ENCODE measurements at regions of chr11 and their contacts with region 1.

Region 1: GRCh38 chr11:63768237-63769043 is at the start of gene ZFTA:
- DNase-seq: peak; percentile 64
- ATAC-seq: peak; percentile 59
- H3K4me3 ChIP-seq: peak within 1 kb of the TSS; percentile 100
- H3K27ac ChIP-seq: no peak within 1 kb of the TSS
- H3K4me1 ChIP-seq: peaks cover 9% of the 10 kb centered on the region; the same call in 1 of the 2 replicates
- H3K27me3 ChIP-seq: no peaks in the 10 kb centered on the region
- CTCF ChIP-seq: peak; percentile 45
- total RNA-seq, gene ZFTA: 15.1 and 29.5 TPM in 2 replicates

Region 2: GRCh38 chr11:63698976-63699733 is 69.3 kb before region 1 on chr11:
- CTCF ChIA-PET with region 1: no interaction called
- POLR2A ChIA-PET with region 1: no interaction called
- intact Hi-C with region 1: no loop called
- DNase-seq: no peak
- ATAC-seq: no peak
- H3K4me3 ChIP-seq: no peak overlapping the region
- H3K27ac ChIP-seq: no peak overlapping the region
- H3K4me1 ChIP-seq: no peaks in the 10 kb centered on the region
- H3K27me3 ChIP-seq: no peaks in the 10 kb centered on the region
- CTCF ChIP-seq: no peak

Region 3: DNA sequence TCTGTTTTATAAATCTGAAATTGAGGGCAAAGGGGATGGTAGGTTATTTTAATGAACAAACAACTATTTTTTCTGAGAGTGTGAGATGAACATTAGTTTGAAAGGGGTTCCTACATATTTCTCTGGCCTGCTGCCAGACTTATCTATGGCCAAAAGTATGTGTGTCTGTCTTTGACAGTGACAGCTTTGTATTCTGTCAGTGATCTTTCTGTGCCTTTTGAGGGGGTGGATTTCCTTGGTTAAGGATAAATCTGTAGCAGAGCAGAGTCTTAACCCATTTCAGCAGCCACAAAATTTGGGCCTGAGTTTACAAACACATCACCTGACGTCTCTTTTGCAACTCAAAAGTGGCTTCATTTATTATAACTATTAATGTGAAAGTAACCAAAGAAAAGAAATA is 30.7 kb before region 1 on chr11:
- CTCF ChIA-PET with region 1: no interaction called
- POLR2A ChIA-PET with region 1: no interaction called
- intact Hi-C with region 1: no loop called
- DNase-seq: no peak
- ATAC-seq: no peak
- H3K4me3 ChIP-seq: no peak overlapping the region
- H3K27ac ChIP-seq: no peak overlapping the region
- H3K4me1 ChIP-seq: no peaks in the 10 kb centered on the region
- H3K27me3 ChIP-seq: no peaks in the 10 kb centered on the region
- CTCF ChIP-seq: no peak

Region 4: DNA sequence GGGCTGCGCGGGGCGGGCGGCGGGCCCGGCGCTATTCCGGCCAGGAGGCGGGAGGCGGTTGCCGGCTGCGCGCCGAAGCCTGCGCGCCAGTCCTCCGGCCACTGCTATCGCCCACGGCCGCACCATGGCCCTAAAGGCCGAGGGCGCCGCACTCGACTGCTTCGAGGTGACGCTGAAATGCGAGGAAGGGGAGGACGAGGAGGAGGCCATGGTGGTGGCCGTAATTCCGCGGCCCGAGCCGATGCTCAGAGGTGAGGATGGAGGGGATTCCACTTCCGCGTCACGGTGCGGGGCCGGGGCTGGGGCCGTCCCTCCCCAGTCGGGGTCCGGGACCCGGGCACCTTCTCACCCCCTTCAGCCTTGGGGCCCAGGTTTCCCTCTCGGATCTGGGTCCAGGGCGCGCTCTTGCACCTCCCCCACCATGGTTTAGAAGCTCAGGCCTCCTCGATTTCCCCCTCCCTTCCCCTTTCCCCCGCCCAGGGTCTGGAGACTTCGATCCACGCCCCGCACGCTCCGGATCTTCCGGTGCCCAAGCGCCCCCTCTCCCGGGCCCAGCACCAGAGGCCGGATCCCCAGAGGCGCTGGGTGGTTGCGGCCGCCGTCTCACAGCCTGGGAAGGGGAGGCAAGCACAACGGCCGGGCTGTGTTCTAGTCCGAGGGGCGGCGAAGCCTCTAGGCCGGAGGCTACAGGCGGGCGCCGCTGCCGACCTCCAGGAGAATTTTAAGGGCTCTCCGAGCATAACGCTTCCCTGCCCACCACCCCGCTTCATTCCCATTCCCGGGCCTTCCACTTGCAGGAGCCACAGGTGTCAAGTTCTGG is 45.3 kb after region 1 on chr11:
- CTCF ChIA-PET with region 1: no interaction called
- POLR2A ChIA-PET with region 1: no interaction called
- intact Hi-C with region 1: loop called (anchors 1 kb)
- DNase-seq: peak; percentile 49
- ATAC-seq: peak; percentile 62
- H3K4me3 ChIP-seq: peak overlapping the region; percentile 96
- H3K27ac ChIP-seq: no peak overlapping the region; the same call in 1 of the 2 replicates
- H3K4me1 ChIP-seq: peaks cover 17% of the 10 kb centered on the region
- H3K27me3 ChIP-seq: no peaks in the 10 kb centered on the region
- CTCF ChIP-seq: no peak

Region 5: GRCh38 chr11:63826471-63827190 is 58.2 kb after region 1 on chr11:
- CTCF ChIA-PET with region 1: no interaction called
- POLR2A ChIA-PET with region 1: interaction called, 18 read pairs
- intact Hi-C with region 1: no loop called
- DNase-seq: no peak
- ATAC-seq: no peak
- H3K4me3 ChIP-seq: no peak overlapping the region
- H3K27ac ChIP-seq: no peak overlapping the region
- H3K4me1 ChIP-seq: no peaks in the 10 kb centered on the region
- H3K27me3 ChIP-seq: no peaks in the 10 kb centered on the region
- CTCF ChIP-seq: no peak

Region 6: DNA sequence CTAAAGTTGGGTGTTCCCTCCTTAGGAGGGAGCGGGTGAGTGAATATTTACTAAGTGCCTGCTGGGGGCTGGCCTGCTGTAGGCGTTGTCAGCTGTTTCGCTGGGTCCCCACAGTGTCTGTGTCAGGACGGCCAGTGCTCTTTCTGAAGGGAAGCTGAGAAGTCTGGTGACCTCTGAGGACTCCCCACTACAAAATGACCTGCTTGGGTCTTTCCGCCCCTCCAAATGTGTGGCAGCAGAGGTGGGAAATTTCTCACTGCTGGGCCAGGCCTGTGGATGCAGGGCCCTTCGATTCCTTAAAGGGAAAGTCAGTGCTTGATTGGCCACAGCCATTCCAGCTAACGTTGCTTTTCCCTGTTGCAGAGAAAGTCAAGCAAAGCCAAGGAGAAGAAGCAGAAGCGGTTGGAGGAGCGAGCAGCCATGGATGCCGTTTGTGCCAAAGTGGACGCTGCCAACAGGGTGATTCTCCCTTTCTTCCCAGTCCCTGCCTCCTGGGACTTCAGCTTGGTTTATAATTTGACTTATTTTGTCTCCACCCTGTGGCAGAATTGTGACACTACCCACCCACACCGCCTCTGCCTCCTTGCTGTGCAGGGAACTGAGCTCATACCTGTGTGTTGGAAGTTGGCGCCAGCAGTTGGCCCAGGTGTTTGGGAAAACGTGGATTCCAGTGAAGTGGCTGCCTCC is 177.2 kb after region 1 on chr11:
- CTCF ChIA-PET with region 1: interaction called, 7 read pairs
- POLR2A ChIA-PET with region 1: no interaction called
- intact Hi-C with region 1: loop called (anchors 5 kb)
- DNase-seq: peak; percentile 87
- ATAC-seq: peak; percentile 99
- H3K4me3 ChIP-seq: no peak overlapping the region
- H3K27ac ChIP-seq: no peak overlapping the region
- H3K4me1 ChIP-seq: no peaks in the 10 kb centered on the region
- H3K27me3 ChIP-seq: no peaks in the 10 kb centered on the region
- CTCF ChIP-seq: peak; percentile 89

Region 7: DNA sequence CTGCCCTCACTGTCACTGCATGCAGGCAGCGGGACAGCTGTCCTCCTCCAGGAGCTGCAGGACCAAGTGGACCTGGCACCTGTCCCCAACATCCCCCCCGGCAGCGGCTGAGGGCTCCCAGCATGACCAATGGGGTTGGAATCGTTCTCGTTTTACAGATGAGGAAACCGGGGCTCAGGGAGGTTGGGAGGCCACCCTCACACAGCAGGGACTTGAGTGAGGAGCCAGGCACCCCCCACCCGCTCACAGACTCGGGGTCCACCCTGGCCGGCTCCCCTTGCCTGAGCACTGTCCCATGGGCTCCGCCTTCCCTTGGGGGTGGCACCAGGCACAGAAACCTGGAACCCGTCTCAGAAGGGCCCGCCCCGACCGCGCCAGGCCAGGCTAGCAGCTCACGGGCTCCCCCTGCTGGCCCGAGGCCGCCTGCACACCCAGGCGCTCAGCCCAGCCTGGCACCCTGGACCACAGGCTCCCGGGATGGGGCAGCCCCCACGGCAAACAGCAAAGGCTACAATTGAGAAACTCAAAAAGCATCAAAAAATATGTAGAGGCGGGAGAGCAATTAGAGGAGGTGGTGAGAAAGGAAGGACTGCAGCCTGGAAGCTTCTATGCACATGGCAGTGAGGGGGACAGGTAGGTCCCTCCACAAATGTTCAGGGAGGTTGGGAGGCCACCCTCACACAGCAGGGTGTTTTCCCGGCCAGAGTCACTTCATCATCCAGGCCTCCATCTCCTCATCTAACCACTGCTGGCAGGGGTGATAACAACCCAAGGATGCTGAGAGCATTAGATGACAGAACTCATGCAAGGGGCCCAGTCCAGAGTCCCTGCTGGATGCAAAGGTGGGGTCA is 384.6 kb after region 1 on chr11:
- CTCF ChIA-PET with region 1: no interaction called
- POLR2A ChIA-PET with region 1: no interaction called
- intact Hi-C with region 1: loop called (anchors 10 kb)
- DNase-seq: peak; percentile 76
- ATAC-seq: peak; percentile 96
- H3K4me3 ChIP-seq: peak overlapping the region; percentile 36; the same call in 1 of the 2 replicates
- H3K27ac ChIP-seq: no peak overlapping the region
- H3K4me1 ChIP-seq: no peaks in the 10 kb centered on the region
- H3K27me3 ChIP-seq: no peaks in the 10 kb centered on the region
- CTCF ChIP-seq: peak; percentile 99

Measured in PC-3 (cell line).